Ascending aorta (tissue), 2 donors: ENCODE measurements at regions of chr4 and their contacts with region 1.

Region 1: GRCh38 chr4:83012687-83013419 is 2.2 kb upstream of the LIN54 start:
- DNase-seq: peak; percentile 75 to 97
- H3K4me3 ChIP-seq: peak overlapping the region; percentile 78 to 88
- H3K27ac ChIP-seq: peak overlapping the region; percentile 71 to 89
- H3K4me1 ChIP-seq: peaks cover 0 to 19% of the 10 kb centered on the region in 2 donors
- H3K27me3 ChIP-seq: no peaks in the 10 kb centered on the region
- CTCF ChIP-seq: peak; percentile 60 to 70 (median 63)

Region 2: DNA sequence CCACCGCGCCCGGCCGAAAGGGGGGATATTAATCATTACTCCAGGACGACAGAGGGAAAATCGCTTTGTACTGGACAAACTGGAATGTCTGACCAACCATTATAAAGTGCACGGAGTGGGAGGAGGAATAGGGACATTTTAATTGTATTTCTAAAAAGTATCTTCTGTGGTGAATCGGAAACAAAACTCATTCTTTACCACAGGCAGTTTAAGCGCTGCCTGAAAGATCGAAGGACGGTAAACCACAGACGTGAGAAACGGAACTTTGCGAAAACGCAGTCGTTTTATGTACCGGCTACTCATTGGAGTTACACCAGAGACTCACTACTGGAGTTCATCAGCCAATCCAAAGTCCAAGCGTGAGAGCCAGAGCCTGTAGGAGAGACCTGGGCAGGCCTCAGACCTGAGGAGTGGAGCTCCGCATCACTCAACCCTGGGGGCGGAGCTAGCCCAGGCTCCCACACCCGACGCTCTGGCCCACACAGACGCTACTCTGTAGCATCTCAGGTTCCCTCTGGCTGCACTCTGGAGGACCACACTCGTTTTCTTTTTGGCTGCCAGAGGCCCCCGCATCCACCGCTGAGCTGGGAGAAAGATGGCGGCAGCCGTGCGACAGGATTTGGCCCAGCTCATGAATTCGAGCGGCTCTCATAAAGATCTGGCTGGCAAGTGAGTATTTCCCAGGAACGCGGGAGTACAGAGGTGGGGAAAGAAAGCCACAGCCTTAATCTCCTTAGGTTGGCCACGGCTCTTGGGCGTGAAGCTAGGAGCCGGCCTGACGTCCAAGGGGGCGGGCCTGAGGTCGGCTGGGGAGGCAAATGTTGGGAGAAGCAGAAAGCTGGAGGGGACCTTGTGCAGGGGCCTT is 22.0 kb after region 1 on chr4 and contains the start of gene COPS4:
- intact Hi-C with region 1: loop called (anchors 1 kb)
- DNase-seq: peak; percentile 95 to 99
- H3K4me3 ChIP-seq: peak within 1 kb of the TSS; percentile 76 to 79
- H3K27ac ChIP-seq: peak within 1 kb of the TSS; percentile 92 to 94
- H3K4me1 ChIP-seq: peaks cover 0 to 16% of the 10 kb centered on the region in 2 donors
- H3K27me3 ChIP-seq: no peaks in the 10 kb centered on the region
- CTCF ChIP-seq: peak; percentile 15 to 59 (median 43)
- total RNA-seq, gene COPS4: 83.5 TPM